ENCODE measurements at regions of chr15 and their contacts with region 1.

Region 1: DNA sequence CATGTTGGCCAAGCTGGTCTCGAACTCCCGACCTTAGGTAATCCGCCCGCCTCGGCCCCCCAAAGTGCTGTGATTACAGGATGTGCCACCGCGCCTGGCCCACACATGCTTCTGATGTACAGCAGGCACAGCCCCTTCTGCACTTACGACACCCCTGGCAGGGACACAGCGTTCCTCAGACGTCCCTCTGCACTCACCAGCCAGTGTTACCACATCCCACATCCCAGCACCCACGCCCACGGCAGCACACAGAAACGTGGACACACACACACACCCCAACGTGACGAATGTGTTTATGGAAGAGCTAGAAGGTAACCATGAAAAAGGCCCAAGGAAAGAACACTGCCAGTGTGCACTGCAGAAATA is 576 bp upstream of the RPAP1 start:
- DNase-seq: peak in 4 of 5 donors; percentile 21 to 56 (median 48)
- H3K4me3 ChIP-seq: peak overlapping the region; percentile 97
- H3K4me3 Mint-ChIP-seq: peak overlapping the region; percentile 87 to 97 (median 96)
- H3K27ac ChIP-seq: peak overlapping the region; percentile 73
- H3K27ac Mint-ChIP-seq: peak overlapping the region; percentile 86 to 98 (median 95)
- H3K4me1 ChIP-seq: peaks cover 9% of the 10 kb centered on the region
- H3K4me1 Mint-ChIP-seq: peaks cover 17 to 26% (median 24%) of the 10 kb centered on the region in 3 donors
- H3K27me3 ChIP-seq: no peaks in the 10 kb centered on the region
- H3K27me3 Mint-ChIP-seq: peaks cover 0 to 2% of the 10 kb centered on the region in 2 donors

Region 2: GRCh38 chr15:41557673-41558399 is 13.2 kb after region 1 on chr15:
- CTCF ChIA-PET with region 1: interaction called, 15 read pairs
- POLR2A ChIA-PET with region 1: interaction called, 15 read pairs
- DNase-seq: peak; percentile 67 to 86 (median 80)
- H3K4me3 ChIP-seq: peak overlapping the region; percentile 33
- H3K4me3 Mint-ChIP-seq: peak overlapping the region; percentile 71 to 93 (median 90)
- H3K27ac ChIP-seq: peak overlapping the region; percentile 5
- H3K27ac Mint-ChIP-seq: peak overlapping the region; percentile 56 to 97 (median 96)
- H3K4me1 ChIP-seq: peaks cover 18% of the 10 kb centered on the region
- H3K4me1 Mint-ChIP-seq: peaks cover 17 to 18% (median 18%) of the 10 kb centered on the region in 3 donors
- H3K27me3 ChIP-seq: peaks cover 8% of the 10 kb centered on the region
- H3K27me3 Mint-ChIP-seq: peaks cover 20 to 22% of the 10 kb centered on the region in 2 donors

Region 3: DNA sequence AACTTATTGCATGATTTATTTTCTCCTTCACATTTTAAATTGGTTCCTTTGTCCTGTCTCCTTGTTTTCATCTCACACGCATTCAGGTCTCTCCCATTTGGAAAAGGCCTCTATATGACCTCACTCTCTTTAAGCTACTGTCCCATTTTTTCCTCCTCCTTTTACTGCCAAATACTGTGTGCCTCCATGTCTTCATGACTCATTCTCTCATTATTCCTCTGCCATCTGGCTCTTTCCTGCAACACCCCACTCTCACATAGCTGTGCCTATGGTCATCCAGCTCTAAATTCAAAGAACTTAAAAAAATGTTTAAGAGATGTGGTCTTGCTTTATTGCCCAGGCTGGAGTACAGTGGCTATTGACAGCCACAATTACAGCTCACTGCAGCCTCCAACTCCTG is 62.4 kb after region 1 on chr15:
- CTCF ChIA-PET with region 1: no interaction called
- POLR2A ChIA-PET with region 1: no interaction called
- DNase-seq: no peak
- H3K4me3 ChIP-seq: no peak overlapping the region
- H3K4me3 Mint-ChIP-seq: no peak overlapping the region
- H3K27ac ChIP-seq: no peak overlapping the region
- H3K27ac Mint-ChIP-seq: no peak overlapping the region
- H3K4me1 ChIP-seq: peaks cover 6% of the 10 kb centered on the region
- H3K4me1 Mint-ChIP-seq: peaks cover 7 to 12% (median 10%) of the 10 kb centered on the region in 3 donors
- H3K27me3 ChIP-seq: no peaks in the 10 kb centered on the region
- H3K27me3 Mint-ChIP-seq: peaks cover 3 to 15% of the 10 kb centered on the region in 2 donors